ENCODE measurements at regions of chr14 and their contacts with region 1.

Region 1: GRCh38 chr14:58513272-58513671 is 85.8 kb downstream of the KIAA0586 start:
- DNase-seq: no peak
- ATAC-seq: no peak
- H3K4me3 ChIP-seq: no peak overlapping the region
- H3K27ac ChIP-seq: no peak overlapping the region
- H3K4me1 ChIP-seq: no peaks in the 10 kb centered on the region
- H3K27me3 ChIP-seq: no peaks in the 10 kb centered on the region
- CTCF ChIP-seq: no peak
- POLR2A ChIP-seq: no peak

Region 2: DNA sequence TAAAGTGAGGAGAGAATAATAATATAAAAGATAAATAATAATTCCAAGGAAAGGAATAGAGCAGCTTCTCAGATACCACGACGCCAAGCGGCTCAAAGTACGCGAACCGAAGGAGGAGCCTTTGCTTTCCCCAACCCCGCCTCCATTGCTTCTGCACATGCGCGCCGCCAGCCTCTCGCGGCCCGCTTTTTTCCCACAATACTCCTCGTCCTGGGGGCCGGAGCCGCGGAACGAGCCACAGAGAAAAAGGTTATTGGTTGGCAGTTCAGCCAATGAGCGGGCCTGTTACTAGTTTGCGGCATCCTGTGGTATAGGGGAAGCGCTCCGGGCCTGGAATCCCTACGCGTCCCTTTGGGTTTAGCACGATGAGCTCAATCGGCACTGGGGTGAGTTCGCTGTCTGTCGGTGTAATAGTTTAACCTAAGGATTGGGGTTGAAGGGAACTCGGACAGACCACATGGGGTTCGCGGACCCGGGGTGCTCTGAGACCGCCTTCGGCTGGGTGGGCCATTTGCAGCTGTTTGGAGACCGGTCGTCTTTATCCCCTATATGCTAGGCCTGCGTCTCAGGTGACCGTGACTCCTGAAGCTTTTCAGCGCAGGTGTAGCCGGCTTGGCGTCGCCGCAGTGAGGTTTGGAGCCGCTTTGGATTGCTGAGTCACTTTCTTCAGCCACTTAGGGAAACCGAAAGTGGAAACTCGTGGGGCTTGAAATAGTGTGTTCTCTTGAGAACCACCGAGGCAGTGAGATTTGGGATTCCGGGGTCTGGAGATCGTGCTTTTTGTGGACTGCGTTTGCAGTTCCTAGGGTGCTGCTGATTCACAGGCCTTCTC is 268.5 kb before region 1 on chr14 and contains the start of gene PSMA3:
- intact Hi-C with region 1: no loop called
- DNase-seq: peak; percentile 98 to 99 (median 98)
- ATAC-seq: peak; percentile 95 to 99 (median 98)
- H3K4me3 ChIP-seq: peak within 1 kb of the TSS; percentile 66 to 96 (median 84)
- H3K27ac ChIP-seq: peak within 1 kb of the TSS; percentile 82 to 99 (median 96)
- H3K4me1 ChIP-seq: peaks cover 4 to 42% (median 30%) of the 10 kb centered on the region in 12 donors
- H3K27me3 ChIP-seq: no peaks in the 10 kb centered on the region
- CTCF ChIP-seq: peak in 3 of 12 donors; percentile 13 to 35 (median 30)
- POLR2A ChIP-seq: peak; percentile 7 to 75
- total RNA-seq, gene PSMA3: 121 to 232 (median 155) TPM

Region 3: DNA sequence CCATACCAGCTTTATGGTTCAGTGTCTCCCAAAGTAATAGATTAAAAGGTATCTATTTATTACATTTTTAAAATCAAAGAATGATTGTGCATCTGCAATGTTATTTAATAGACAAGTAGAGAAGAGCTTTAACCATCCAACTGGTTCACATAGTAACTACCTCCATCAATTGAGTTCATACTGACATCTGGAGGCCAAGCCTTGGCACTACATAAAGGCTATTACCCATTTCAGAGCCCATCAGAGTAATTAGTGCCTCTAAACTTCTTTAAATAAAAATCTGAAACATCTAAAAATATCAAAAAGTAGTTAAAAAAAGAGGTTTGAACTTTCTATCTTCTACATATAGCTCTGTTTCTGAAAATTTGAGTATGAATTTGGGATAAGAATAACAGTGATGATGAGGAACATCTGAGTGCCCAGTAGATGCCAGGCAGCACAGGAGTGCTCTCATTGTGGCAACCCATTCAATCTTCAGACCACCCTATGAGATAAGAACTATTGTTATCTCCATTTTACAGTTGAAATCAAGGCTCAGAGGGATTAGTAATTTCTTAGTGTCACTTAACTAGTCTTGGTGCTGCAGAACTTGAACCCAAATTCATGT is 542.3 kb after region 1 on chr14:
- intact Hi-C with region 1: loop called in 2 of 10 experiments (anchors 5 to 10 kb)
- DNase-seq: peak in 1 of 5 donors; percentile 12
- ATAC-seq: peak in 3 of 4 donors; percentile 55 to 70 (median 58)
- H3K4me3 ChIP-seq: no peak overlapping the region
- H3K27ac ChIP-seq: no peak overlapping the region
- H3K4me1 ChIP-seq: no peaks in the 10 kb centered on the region
- H3K27me3 ChIP-seq: peaks cover 0 to 5% (median 0%) of the 10 kb centered on the region in 9 donors
- CTCF ChIP-seq: peak; percentile 49 to 84 (median 70)
- POLR2A ChIP-seq: no peak

Measured in heart left ventricle (tissue), 16 donors.